H1 (cell line): ENCODE measurements at regions of chr12 and their contacts with region 1.

Region 1: DNA sequence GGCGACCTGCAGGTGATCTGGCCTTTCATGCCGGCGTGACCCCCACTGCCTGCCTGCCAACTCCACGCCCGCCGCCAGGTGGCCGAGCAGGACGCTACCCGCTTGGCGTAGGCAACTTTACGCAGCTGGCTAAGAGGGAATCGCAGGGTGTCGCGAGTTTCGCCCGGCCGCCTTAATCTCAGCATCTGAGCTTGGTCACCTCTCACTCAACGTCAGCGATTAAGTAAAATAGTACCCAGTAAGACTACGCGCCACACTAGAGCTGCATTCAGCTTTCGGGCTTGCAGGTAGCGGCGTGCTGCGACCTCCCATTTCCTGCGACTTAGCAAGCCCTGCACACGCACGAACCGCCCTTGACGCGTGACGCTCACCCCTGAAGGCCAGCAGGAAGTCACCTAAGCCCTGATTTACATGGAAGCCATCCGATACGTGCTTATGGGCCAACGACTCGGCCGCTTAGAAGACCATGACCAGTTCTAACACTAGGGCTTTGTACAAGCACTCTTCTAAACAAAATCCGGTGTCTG is 33.2 kb downstream of the WBP11 start:
- DNase-seq: peak in 1 of 2 experiments; percentile 61
- H3K4me3 ChIP-seq: peak overlapping the region; percentile 84 to 99 (median 92)
- H3K27ac ChIP-seq: peak overlapping the region; percentile 93
- H3K4me1 ChIP-seq: no peaks in the 10 kb centered on the region; a peak in 2 of 7 replicates
- H3K27me3 ChIP-seq: no peaks in the 10 kb centered on the region
- CTCF ChIP-seq: peak; percentile 78 to 97 (median 83)
- EP300 ChIP-seq: no peak
- POLR2A ChIP-seq: peak; percentile 84 to 90
- RAD21 ChIP-seq: peak; percentile 33 to 37; a peak in 2 of 4 replicates

Region 2: DNA sequence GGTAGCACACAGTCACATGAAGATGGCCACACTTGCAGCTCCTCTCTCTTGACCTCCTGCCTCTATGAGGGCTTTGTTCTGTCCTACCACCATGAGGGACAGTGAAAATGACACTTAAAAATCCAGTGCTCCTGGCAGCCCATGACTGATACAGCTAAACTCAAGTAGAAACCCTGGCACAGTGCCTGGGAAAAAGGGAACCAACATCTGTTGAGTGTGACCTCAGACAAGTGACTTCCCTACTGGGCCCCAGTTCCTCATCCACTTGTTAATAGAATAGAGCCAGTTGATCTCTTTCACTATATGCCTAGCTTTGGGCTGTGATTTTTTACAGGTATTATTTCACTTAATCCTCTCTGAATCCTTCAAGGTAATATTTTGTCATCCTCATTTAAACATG is 78.5 kb before region 1 on chr12:
- CTCF ChIA-PET with region 1: no interaction called
- POLR2A ChIA-PET with region 1: interaction called, 43 read pairs
- DNase-seq: no peak
- H3K4me3 ChIP-seq: no peak overlapping the region
- H3K27ac ChIP-seq: no peak overlapping the region
- H3K4me1 ChIP-seq: no peaks in the 10 kb centered on the region; a peak in 1 of 7 replicates
- H3K27me3 ChIP-seq: peaks cover 0 to 3% (median 0%) of the 10 kb centered on the region in 4 experiments; a peak in 3 of 7 replicates
- CTCF ChIP-seq: no peak
- EP300 ChIP-seq: no peak
- POLR2A ChIP-seq: peak; percentile 46 to 91
- RAD21 ChIP-seq: no peak

Region 3: DNA sequence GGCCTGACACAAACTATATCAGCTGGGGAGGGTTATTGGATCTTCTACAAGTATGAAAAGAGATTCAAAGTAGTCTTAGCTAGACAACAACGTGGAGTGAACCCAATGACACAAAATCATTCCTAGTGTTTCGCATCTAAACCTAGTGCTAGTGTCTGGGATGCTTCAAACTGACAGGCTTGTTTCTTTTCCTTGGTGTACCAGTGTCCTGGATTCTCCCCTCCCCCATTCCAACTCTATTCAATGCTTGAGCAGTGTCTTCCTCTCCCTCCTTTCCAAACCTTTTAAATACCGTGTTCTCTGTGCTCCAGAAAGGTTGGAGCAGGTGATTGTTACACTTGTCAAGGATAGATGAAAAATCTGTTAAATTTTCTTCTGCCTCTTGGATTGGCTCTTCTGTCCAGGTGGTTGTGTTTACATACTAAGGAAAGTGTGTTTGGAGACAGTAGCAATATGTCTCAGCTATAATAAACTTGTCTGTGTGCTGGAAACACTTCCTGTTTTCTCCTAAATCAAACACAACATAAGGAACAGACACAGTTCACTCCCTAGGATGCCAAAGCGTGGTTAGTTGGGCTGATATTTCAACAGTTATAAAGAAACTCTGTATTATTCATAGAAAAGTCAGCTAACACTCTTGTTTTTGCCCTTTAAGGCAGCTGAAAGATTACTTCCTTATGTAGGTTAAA is 59.3 kb before region 1 on chr12:
- CTCF ChIA-PET with region 1: interaction called, 7 read pairs
- POLR2A ChIA-PET with region 1: interaction called, 58 read pairs
- DNase-seq: no peak
- H3K4me3 ChIP-seq: peak overlapping the region; percentile 9 to 50 (median 24); a peak in 6 of 8 replicates
- H3K27ac ChIP-seq: no peak overlapping the region; the same call in 1 of the 2 replicates
- H3K4me1 ChIP-seq: peaks cover 10 to 31% (median 20%) of the 10 kb centered on the region in 4 experiments
- H3K27me3 ChIP-seq: no peaks in the 10 kb centered on the region
- CTCF ChIP-seq: no peak
- EP300 ChIP-seq: no peak
- POLR2A ChIP-seq: no peak; a peak in 1 of 3 replicates
- RAD21 ChIP-seq: no peak

Region 4: GRCh38 chr12:14723763-14724162 is 46.3 kb before region 1 on chr12:
- CTCF ChIA-PET with region 1: interaction called, 22 read pairs
- POLR2A ChIA-PET with region 1: interaction called, 35 read pairs
- DNase-seq: no peak
- H3K4me3 ChIP-seq: no peak overlapping the region
- H3K27ac ChIP-seq: no peak overlapping the region
- H3K4me1 ChIP-seq: no peaks in the 10 kb centered on the region
- H3K27me3 ChIP-seq: no peaks in the 10 kb centered on the region
- CTCF ChIP-seq: peak; percentile 35 to 82 (median 82)
- EP300 ChIP-seq: no peak
- POLR2A ChIP-seq: no peak
- RAD21 ChIP-seq: peak; percentile 92 to 94

Region 5: GRCh38 chr12:14756334-14757143 is 13.5 kb before region 1 on chr12:
- CTCF ChIA-PET with region 1: interaction called, 12 read pairs
- POLR2A ChIA-PET with region 1: interaction called, 69 read pairs
- DNase-seq: peak in 1 of 2 experiments; percentile 62
- H3K4me3 ChIP-seq: no peak overlapping the region
- H3K27ac ChIP-seq: no peak overlapping the region
- H3K4me1 ChIP-seq: peaks cover 0 to 2% (median 0%) of the 10 kb centered on the region in 4 experiments; a peak in 1 of 7 replicates
- H3K27me3 ChIP-seq: no peaks in the 10 kb centered on the region
- CTCF ChIP-seq: peak; percentile 42 to 71 (median 69)
- EP300 ChIP-seq: no peak
- POLR2A ChIP-seq: no peak
- RAD21 ChIP-seq: peak; percentile 19 to 48; a peak in 3 of 4 replicates

Region 6: GRCh38 chr12:14795028-14795448 is 25.0 kb after region 1 on chr12:
- CTCF ChIA-PET with region 1: interaction called, 4 read pairs
- POLR2A ChIA-PET with region 1: interaction called, 18 read pairs
- DNase-seq: no peak
- H3K4me3 ChIP-seq: no peak overlapping the region
- H3K27ac ChIP-seq: no peak overlapping the region
- H3K4me1 ChIP-seq: no peaks in the 10 kb centered on the region
- H3K27me3 ChIP-seq: no peaks in the 10 kb centered on the region
- CTCF ChIP-seq: no peak
- EP300 ChIP-seq: no peak
- POLR2A ChIP-seq: no peak
- RAD21 ChIP-seq: no peak

Region 7: GRCh38 chr12:14824012-14824634 is 54.1 kb after region 1 on chr12:
- CTCF ChIA-PET with region 1: interaction called, 3 read pairs
- POLR2A ChIA-PET with region 1: interaction called, 12 read pairs
- DNase-seq: no peak
- H3K4me3 ChIP-seq: no peak overlapping the region
- H3K27ac ChIP-seq: no peak overlapping the region
- H3K4me1 ChIP-seq: no peaks in the 10 kb centered on the region; a peak in 2 of 7 replicates
- H3K27me3 ChIP-seq: no peaks in the 10 kb centered on the region
- CTCF ChIP-seq: no peak
- EP300 ChIP-seq: no peak
- POLR2A ChIP-seq: no peak
- RAD21 ChIP-seq: no peak